Ovary (tissue), 10 donors: ENCODE measurements at regions of chr11 and their contacts with region 1.

Region 1: DNA sequence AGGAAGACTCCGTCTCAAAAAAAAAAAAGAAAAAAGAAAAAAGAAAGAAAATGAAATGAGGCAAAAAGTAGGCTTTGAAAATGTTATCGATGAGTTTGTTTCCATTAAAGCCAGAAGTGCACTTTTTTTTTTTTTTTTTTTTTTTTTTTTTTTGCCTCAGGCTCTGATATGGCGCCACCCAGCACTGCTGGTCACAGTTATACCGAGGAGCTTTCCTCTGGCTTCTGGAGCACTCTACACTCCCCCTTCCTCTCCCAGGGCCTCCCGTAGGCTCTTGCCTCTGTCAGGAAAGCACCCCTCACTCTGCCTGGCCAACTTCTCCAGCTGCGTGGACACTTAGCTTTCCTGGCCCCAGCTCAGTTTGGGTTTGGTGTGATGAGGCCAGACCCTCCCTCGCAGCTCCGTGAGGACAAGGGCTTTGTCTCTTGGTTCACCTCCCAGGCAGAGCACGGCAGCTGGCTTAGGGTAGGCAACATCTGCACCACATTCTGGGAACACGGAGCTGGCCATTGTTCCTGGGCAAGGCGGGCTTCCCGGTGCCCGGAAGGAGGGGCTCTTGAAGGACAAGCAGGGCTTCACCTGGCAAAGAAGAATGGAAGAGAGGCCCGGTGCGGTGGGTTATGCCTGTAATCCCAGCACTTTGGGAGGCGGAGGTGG is 16.9 kb downstream of the FADS2 start:
- DNase-seq: no peak
- H3K4me3 ChIP-seq: no peak overlapping the region
- H3K27ac ChIP-seq: no peak overlapping the region
- H3K4me1 ChIP-seq: no peaks in the 10 kb centered on the region
- H3K27me3 ChIP-seq: no peaks in the 10 kb centered on the region
- CTCF ChIP-seq: no peak
- EP300 ChIP-seq: no peak
- POLR2A ChIP-seq: no peak

Region 2: DNA sequence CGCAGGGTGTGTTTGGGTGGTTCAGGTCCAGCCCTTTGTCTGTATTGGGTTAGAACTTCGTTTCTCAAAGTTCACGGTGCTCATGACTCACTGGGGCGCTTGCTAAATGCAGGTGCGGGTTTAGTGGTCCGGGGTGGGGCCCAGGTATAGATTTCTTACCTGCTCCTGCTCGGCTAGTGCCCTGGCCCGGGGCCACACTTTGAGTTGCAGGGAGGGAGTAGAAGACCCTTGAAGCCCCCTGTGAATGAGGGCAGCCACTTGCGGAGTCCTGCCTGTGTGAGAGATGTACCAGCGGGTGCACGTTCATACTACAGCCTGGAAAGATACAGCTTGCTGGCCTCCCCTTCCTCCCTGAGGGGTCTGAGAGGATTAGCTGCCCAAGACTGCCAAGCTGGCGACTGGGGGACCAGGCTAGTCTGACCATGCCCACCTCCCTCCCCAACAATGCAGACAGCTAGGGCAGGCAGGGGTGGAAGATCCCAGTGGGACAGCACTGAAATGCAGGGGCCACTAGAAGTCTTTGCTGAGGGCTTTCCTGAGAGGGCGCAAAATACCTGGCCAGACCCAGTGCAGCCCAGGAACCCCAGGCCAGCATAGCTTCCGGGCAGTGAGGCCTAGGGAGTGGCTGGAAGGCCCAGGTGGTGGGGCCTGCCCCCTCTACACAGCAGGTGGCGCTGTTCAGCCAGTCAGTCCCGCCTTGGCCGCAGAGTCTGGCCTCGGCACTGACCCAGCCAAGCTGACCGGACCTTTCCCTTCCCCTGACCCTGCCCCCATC is 97.7 kb before region 1 on chr11:
- intact Hi-C with region 1: no loop called
- DNase-seq: peak; percentile 87 to 92 (median 87)
- H3K4me3 ChIP-seq: no peak overlapping the region
- H3K27ac ChIP-seq: no peak overlapping the region
- H3K4me1 ChIP-seq: peaks cover 14% of the 10 kb centered on the region
- H3K27me3 ChIP-seq: no peaks in the 10 kb centered on the region
- CTCF ChIP-seq: peak; percentile 73 to 90 (median 89)
- EP300 ChIP-seq: no peak
- POLR2A ChIP-seq: no peak

Region 3: GRCh38 chr11:61814958-61815789 is 29.9 kb before region 1 on chr11:
- intact Hi-C with region 1: loop called in 1 of 4 experiments (anchors 1 kb)
- DNase-seq: peak; percentile 97 to 98 (median 97)
- H3K4me3 ChIP-seq: peak overlapping the region; percentile 73
- H3K27ac ChIP-seq: peak overlapping the region; percentile 95 to 98
- H3K4me1 ChIP-seq: no peaks in the 10 kb centered on the region
- H3K27me3 ChIP-seq: no peaks in the 10 kb centered on the region
- CTCF ChIP-seq: peak in 1 of 3 donors; percentile 21
- EP300 ChIP-seq: peak; percentile 25
- POLR2A ChIP-seq: peak; percentile 99

Region 4: GRCh38 chr11:61899146-61899841 is 54.3 kb after region 1 on chr11:
- intact Hi-C with region 1: no loop called
- DNase-seq: peak; percentile 74 to 90 (median 86)
- H3K4me3 ChIP-seq: no peak overlapping the region
- H3K27ac ChIP-seq: peak overlapping the region; percentile 17 to 57
- H3K4me1 ChIP-seq: peaks cover 3% of the 10 kb centered on the region
- H3K27me3 ChIP-seq: no peaks in the 10 kb centered on the region
- CTCF ChIP-seq: peak; percentile 96 to 99 (median 99)
- EP300 ChIP-seq: no peak
- POLR2A ChIP-seq: no peak